ENCODE measurements at regions of chr18 and their contacts with region 1.

Region 1: GRCh38 chr18:76922107-76922506 is 99.8 kb downstream of the ZNF236 start:
- DNase-seq: peak in 8 of 9 experiments; percentile 34 to 73 (median 52)
- ATAC-seq: peak; percentile 99
- H3K4me3 ChIP-seq: no peak overlapping the region
- H3K4me3 Mint-ChIP-seq: no peak overlapping the region
- H3K27ac ChIP-seq: no peak overlapping the region
- H3K27ac Mint-ChIP-seq: peak overlapping the region; percentile 37
- H3K4me1 ChIP-seq: no peaks in the 10 kb centered on the region
- H3K4me1 Mint-ChIP-seq: peaks cover 15% of the 10 kb centered on the region
- H3K27me3 ChIP-seq: no peaks in the 10 kb centered on the region
- H3K27me3 Mint-ChIP-seq: no peaks in the 10 kb centered on the region
- CTCF ChIP-seq: peak; percentile 66

Region 2: DNA sequence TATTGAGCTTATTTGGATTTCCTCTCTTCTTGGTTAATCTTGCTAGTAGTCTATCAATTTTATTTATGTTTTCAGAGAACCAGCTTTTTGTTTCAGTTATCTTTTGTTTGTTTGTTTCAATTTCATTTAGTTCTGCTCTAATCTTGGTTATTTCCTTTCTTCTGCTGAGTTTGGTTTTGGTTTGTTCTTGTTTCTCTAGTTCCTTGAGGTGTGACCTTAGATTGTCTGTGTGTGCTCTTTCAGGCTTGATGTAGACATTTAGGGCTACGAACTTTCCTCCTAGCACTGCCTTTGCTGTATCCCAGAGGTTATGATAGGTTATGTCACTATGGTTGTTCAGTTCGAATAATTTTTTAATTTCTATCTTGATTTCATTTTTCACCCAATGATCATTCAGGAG is 41.8 kb after region 1 on chr18:
- CTCF ChIA-PET with region 1: no interaction called
- POLR2A ChIA-PET with region 1: no interaction called
- intact Hi-C with region 1: no loop called
- DNase-seq: peak in 1 of 9 experiments; percentile 17
- ATAC-seq: no peak
- H3K4me3 ChIP-seq: no peak overlapping the region
- H3K4me3 Mint-ChIP-seq: no peak overlapping the region
- H3K27ac ChIP-seq: peak overlapping the region in 1 of 2 experiments; percentile 36
- H3K27ac Mint-ChIP-seq: peak overlapping the region; percentile 1
- H3K4me1 ChIP-seq: no peaks in the 10 kb centered on the region
- H3K4me1 Mint-ChIP-seq: peaks cover 23% of the 10 kb centered on the region
- H3K27me3 ChIP-seq: no peaks in the 10 kb centered on the region
- H3K27me3 Mint-ChIP-seq: no peaks in the 10 kb centered on the region
- CTCF ChIP-seq: no peak

Region 3: DNA sequence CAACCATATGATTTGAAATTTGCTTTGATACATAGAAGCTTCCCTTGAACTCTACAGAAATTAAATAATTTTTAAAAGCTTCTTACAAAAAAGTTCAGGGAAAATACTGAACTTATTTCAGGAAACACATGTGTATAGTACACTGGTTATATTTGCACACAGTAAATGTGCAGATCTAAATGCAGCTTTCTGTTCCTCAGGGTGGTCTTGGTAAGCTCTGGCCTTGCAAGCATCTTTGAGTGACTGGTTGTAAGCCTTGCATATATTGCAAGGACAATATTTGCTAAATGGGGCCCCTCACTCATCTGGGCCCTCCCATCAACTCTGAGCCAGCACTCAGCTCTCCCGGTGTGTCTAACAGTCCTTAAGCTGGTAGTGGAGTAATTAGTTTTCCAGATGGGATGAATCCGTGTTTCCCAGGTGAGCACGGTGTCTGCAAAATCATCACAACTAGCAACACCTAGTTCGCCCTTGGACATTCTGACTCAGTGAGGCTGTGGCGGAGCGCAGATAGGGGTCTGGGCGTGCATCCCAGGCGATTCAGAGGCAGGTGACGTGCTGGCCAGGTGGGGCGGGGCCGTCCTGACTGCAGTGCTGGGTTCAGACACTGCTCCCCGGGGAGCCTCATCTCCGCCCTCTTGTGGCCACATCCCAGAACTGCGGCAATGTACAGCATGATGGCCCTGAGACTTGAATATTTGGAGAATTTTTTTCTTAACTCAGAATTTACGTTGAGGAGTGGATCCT is 60.9 kb after region 1 on chr18:
- CTCF ChIA-PET with region 1: interaction called, 5 read pairs
- POLR2A ChIA-PET with region 1: no interaction called
- intact Hi-C with region 1: loop called in 1 of 2 experiments (anchors 5 kb)
- DNase-seq: peak; percentile 72 to 89 (median 84)
- ATAC-seq: peak; percentile 100
- H3K4me3 ChIP-seq: no peak overlapping the region
- H3K4me3 Mint-ChIP-seq: no peak overlapping the region
- H3K27ac ChIP-seq: no peak overlapping the region
- H3K27ac Mint-ChIP-seq: no peak overlapping the region
- H3K4me1 ChIP-seq: peaks cover 3% of the 10 kb centered on the region
- H3K4me1 Mint-ChIP-seq: peaks cover 7% of the 10 kb centered on the region
- H3K27me3 ChIP-seq: no peaks in the 10 kb centered on the region
- H3K27me3 Mint-ChIP-seq: no peaks in the 10 kb centered on the region
- CTCF ChIP-seq: peak; percentile 93

Region 4: GRCh38 chr18:77207540-77207939 is 285.4 kb after region 1 on chr18:
- CTCF ChIA-PET with region 1: no interaction called
- POLR2A ChIA-PET with region 1: no interaction called
- intact Hi-C with region 1: loop called in 1 of 2 experiments (anchors 2 kb)
- DNase-seq: peak; percentile 29 to 80 (median 58)
- ATAC-seq: peak; percentile 93
- H3K4me3 ChIP-seq: no peak overlapping the region
- H3K4me3 Mint-ChIP-seq: peak overlapping the region; percentile 62
- H3K27ac ChIP-seq: no peak overlapping the region
- H3K27ac Mint-ChIP-seq: peak overlapping the region; percentile 34
- H3K4me1 ChIP-seq: peaks cover 40% of the 10 kb centered on the region
- H3K4me1 Mint-ChIP-seq: peaks cover 46% of the 10 kb centered on the region
- H3K27me3 ChIP-seq: no peaks in the 10 kb centered on the region
- H3K27me3 Mint-ChIP-seq: peaks cover 2% of the 10 kb centered on the region
- CTCF ChIP-seq: peak; percentile 57

Region 5: GRCh38 chr18:77461062-77461688 is 539.1 kb after region 1 on chr18:
- CTCF ChIA-PET with region 1: no interaction called
- POLR2A ChIA-PET with region 1: no interaction called
- intact Hi-C with region 1: loop called in 1 of 2 experiments (anchors 10 kb)
- DNase-seq: no peak
- ATAC-seq: no peak
- H3K4me3 ChIP-seq: no peak overlapping the region
- H3K4me3 Mint-ChIP-seq: no peak overlapping the region
- H3K27ac ChIP-seq: no peak overlapping the region
- H3K27ac Mint-ChIP-seq: no peak overlapping the region
- H3K4me1 ChIP-seq: no peaks in the 10 kb centered on the region
- H3K4me1 Mint-ChIP-seq: no peaks in the 10 kb centered on the region
- H3K27me3 ChIP-seq: no peaks in the 10 kb centered on the region
- H3K27me3 Mint-ChIP-seq: peaks cover 23% of the 10 kb centered on the region
- CTCF ChIP-seq: no peak

Region 6: DNA sequence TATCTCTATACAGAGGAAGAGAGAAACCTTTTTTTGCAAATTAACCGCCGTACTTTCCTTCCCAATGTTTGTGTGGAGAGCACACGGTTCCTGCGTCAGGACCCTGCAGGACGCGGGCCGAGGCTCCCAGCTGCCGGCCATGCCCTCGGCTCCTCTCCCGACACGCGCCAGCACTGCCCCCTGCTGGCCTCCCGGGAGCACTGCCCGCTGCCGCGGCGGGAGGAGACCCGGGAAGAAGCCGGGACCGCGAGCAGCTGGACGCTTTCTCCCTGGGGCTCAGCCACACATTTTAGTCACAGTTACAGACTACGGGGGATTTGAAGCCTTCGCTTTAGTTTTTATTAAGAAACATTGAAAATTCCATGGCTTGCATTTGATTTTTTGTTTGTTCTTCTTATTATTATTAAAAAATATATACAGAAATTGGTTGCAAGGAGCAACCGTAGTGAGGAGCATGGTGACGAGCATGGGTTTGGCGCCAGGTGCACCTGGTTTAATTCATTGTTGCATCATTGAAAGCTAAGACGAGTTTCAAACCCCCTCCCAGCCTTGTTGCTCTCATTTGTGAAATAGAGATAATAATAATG is 728.8 kb after region 1 on chr18:
- CTCF ChIA-PET with region 1: no interaction called
- POLR2A ChIA-PET with region 1: no interaction called
- intact Hi-C with region 1: loop called in 1 of 2 experiments (anchors 2 kb)
- DNase-seq: peak in 8 of 9 experiments; percentile 14 to 68 (median 44)
- ATAC-seq: peak; percentile 38
- H3K4me3 ChIP-seq: no peak overlapping the region
- H3K4me3 Mint-ChIP-seq: no peak overlapping the region
- H3K27ac ChIP-seq: no peak overlapping the region
- H3K27ac Mint-ChIP-seq: no peak overlapping the region
- H3K4me1 ChIP-seq: peaks cover 5% of the 10 kb centered on the region
- H3K4me1 Mint-ChIP-seq: peaks cover 1% of the 10 kb centered on the region
- H3K27me3 ChIP-seq: peaks cover 0 to 3% of the 10 kb centered on the region in 2 experiments
- H3K27me3 Mint-ChIP-seq: peaks cover 15% of the 10 kb centered on the region
- CTCF ChIP-seq: peak; percentile 54

Region 7: GRCh38 chr18:77702686-77703085 is 780.6 kb after region 1 on chr18:
- CTCF ChIA-PET with region 1: no interaction called
- POLR2A ChIA-PET with region 1: no interaction called
- intact Hi-C with region 1: loop called in 1 of 2 experiments (anchors 5 kb)
- DNase-seq: peak in 2 of 9 experiments; percentile 26 to 42
- ATAC-seq: no peak
- H3K4me3 ChIP-seq: no peak overlapping the region
- H3K4me3 Mint-ChIP-seq: no peak overlapping the region
- H3K27ac ChIP-seq: no peak overlapping the region
- H3K27ac Mint-ChIP-seq: no peak overlapping the region
- H3K4me1 ChIP-seq: no peaks in the 10 kb centered on the region
- H3K4me1 Mint-ChIP-seq: no peaks in the 10 kb centered on the region
- H3K27me3 ChIP-seq: no peaks in the 10 kb centered on the region
- H3K27me3 Mint-ChIP-seq: peaks cover 22% of the 10 kb centered on the region
- CTCF ChIP-seq: no peak